Posterior cingulate gyrus (tissue), 11 donors: ENCODE measurements at regions of chr16 and their contacts with region 1.

Region 1: DNA sequence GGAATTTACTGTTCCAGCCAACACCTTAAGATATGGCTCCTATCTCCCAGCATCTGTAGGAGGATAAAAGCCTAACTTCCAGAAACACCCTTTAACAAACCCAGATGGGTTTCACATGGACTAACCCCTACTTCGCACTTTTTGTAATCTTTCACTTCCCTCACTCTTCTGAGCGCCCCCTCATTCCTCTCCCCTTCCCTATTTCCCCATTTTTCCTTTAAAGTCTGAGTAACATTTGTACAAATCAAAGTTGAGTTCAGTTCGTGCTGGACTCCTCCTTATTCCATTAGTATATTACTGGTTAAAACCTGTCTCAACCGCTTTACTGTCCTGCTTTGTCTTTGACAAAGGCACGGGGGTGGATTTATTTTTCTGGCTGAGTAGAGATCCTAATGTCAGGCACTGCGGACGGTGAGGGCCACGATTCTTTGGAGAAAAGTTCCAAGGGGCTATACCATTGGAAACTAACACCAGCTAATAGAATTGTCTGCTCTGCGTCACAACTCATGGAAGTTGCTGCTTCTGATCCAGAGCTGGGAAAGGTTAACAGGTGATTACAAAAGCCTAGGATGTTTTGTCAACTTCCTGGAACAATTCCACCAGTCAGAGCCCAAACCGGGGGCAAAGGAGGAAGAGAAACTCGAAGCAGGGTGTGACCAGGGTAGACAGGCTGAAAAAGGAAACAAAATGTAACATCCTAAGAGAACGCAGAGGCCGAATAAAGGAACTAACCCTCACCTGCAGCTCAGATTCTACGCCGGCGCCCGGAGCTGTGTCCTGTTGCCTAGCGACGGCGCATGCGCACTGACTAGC is 12.5 kb downstream of the TAT start:
- DNase-seq: no peak

Region 2: GRCh38 chr16:71461686-71462648 is 102.4 kb before region 1 on chr16 and contains the start of gene ZNF23:
- intact Hi-C with region 1: loop called (anchors 10 kb)
- DNase-seq: peak; percentile 83 to 98 (median 89)

Region 3: DNA sequence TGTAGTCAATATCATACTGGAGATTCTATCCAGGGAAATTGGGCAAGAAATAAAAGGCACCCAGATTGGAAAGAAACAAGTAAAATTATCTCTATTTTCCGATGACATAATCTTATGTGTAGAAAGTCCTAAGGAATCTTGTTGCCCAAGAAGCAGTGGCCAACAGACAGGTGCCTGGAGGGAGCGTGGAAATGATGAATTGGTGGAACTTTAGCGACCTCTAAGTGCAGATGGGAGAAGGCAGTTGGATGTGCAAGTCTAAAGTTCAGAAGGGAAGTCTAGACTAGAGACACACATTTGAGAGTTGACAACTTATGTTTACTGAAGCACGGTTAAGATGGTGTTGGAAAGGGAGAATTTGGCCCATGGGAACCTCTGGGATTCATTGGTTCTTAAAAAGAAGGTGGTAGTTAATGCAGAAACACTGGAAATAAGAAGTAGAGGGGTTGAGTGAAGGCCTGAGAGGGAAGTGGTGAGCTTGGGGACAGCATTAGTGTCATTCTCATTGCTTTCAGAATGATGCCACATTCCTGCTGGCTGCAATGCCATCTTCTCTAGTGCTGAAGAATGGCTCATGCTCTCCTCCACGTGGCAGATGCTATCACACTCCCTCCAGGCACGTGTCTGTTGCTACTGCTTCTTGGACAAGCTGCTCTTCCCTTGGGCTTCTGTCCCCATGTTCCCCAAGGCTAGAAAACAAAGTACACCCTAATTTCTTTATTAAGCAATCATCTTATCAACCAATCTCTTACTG is 11.5 kb before region 1 on chr16:
- intact Hi-C with region 1: no loop called
- DNase-seq: no peak

Region 4: GRCh38 chr16:71610936-71611871 is 46.8 kb after region 1 on chr16:
- intact Hi-C with region 1: loop called (anchors 5 kb)
- DNase-seq: peak; percentile 45 to 96 (median 79)